ENCODE measurements at regions of chr7 and their contacts with region 1.

Region 1: GRCh38 chr7:128343554-128344430 is at the start of gene RBM28:
- DNase-seq: peak; percentile 88
- H3K4me3 Mint-ChIP-seq: peak within 1 kb of the TSS; percentile 98
- H3K27ac Mint-ChIP-seq: peak within 1 kb of the TSS; percentile 89
- H3K4me1 Mint-ChIP-seq: peaks cover 24% of the 10 kb centered on the region
- H3K27me3 Mint-ChIP-seq: no peaks in the 10 kb centered on the region
- total RNA-seq, gene RBM28: 51.9 to 53.2 TPM

Region 2: GRCh38 chr7:127392566-127393367 is 951.0 kb before region 1 on chr7 and contains the start of gene ZNF800:
- CTCF ChIA-PET with region 1: no interaction called
- intact Hi-C with region 1: loop called (anchors 1 kb)
- DNase-seq: peak; percentile 89
- H3K4me3 Mint-ChIP-seq: peak within 1 kb of the TSS; percentile 95
- H3K27ac Mint-ChIP-seq: peak within 1 kb of the TSS; percentile 93
- H3K4me1 Mint-ChIP-seq: peaks cover 61% of the 10 kb centered on the region
- H3K27me3 Mint-ChIP-seq: no peaks in the 10 kb centered on the region
- total RNA-seq, gene ZNF800: 18.2 to 19.5 TPM

Region 3: DNA sequence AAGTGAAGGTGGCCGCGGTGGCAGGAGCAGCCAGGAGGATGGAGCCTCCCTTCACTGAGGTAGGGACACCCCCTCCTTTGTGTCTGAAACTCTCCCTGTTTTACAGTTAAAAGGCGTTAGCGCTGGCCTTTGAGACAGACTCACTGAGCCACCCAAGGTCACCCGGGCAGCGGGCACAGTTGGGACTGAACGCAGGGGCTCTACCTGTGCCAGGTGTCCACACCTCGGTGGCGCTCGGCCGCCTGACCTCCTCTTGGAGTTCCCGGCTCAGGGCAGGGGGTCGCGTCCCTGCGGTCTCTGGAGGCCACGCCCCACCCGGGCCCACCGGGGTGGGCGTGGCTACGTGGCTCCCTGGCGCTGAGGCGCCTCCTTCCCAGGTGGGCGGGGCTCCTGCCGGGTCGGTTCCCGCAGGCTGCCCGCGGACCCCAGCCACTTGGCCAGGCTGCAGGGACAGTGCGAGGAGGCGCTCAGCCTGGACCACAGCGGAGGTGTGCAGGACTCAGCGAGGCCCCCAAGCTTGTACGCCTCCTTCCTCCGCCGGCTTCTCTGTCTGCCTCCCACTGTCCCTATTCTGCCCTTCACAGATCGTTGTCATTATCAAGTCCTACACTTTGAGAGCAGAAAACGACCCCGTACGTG is 142.6 kb before region 1 on chr7:
- CTCF ChIA-PET with region 1: no interaction called
- intact Hi-C with region 1: no loop called
- DNase-seq: no peak
- H3K4me3 Mint-ChIP-seq: peak overlapping the region; percentile 39
- H3K27ac Mint-ChIP-seq: no peak overlapping the region
- H3K4me1 Mint-ChIP-seq: peaks cover 10% of the 10 kb centered on the region
- H3K27me3 Mint-ChIP-seq: peaks cover 36% of the 10 kb centered on the region

Region 4: GRCh38 chr7:128266883-128267607 is 76.7 kb before region 1 on chr7:
- CTCF ChIA-PET with region 1: no interaction called
- intact Hi-C with region 1: no loop called
- DNase-seq: no peak
- H3K4me3 Mint-ChIP-seq: no peak overlapping the region
- H3K27ac Mint-ChIP-seq: no peak overlapping the region
- H3K4me1 Mint-ChIP-seq: peaks cover 2% of the 10 kb centered on the region
- H3K27me3 Mint-ChIP-seq: peaks cover 27% of the 10 kb centered on the region

Region 5: GRCh38 chr7:128322040-128322643 is 21.6 kb before region 1 on chr7:
- CTCF ChIA-PET with region 1: interaction called, 14 read pairs
- intact Hi-C with region 1: no loop called
- DNase-seq: peak; percentile 26
- H3K4me3 Mint-ChIP-seq: no peak overlapping the region
- H3K27ac Mint-ChIP-seq: no peak overlapping the region
- H3K4me1 Mint-ChIP-seq: peaks cover 11% of the 10 kb centered on the region
- H3K27me3 Mint-ChIP-seq: no peaks in the 10 kb centered on the region

Region 6: GRCh38 chr7:128387216-128388144 is 43.7 kb after region 1 on chr7:
- CTCF ChIA-PET with region 1: interaction called, 297 read pairs
- intact Hi-C with region 1: loop called (anchors 1 kb)
- DNase-seq: peak; percentile 80
- H3K4me3 Mint-ChIP-seq: no peak overlapping the region
- H3K27ac Mint-ChIP-seq: no peak overlapping the region
- H3K4me1 Mint-ChIP-seq: no peaks in the 10 kb centered on the region
- H3K27me3 Mint-ChIP-seq: no peaks in the 10 kb centered on the region

Region 7: DNA sequence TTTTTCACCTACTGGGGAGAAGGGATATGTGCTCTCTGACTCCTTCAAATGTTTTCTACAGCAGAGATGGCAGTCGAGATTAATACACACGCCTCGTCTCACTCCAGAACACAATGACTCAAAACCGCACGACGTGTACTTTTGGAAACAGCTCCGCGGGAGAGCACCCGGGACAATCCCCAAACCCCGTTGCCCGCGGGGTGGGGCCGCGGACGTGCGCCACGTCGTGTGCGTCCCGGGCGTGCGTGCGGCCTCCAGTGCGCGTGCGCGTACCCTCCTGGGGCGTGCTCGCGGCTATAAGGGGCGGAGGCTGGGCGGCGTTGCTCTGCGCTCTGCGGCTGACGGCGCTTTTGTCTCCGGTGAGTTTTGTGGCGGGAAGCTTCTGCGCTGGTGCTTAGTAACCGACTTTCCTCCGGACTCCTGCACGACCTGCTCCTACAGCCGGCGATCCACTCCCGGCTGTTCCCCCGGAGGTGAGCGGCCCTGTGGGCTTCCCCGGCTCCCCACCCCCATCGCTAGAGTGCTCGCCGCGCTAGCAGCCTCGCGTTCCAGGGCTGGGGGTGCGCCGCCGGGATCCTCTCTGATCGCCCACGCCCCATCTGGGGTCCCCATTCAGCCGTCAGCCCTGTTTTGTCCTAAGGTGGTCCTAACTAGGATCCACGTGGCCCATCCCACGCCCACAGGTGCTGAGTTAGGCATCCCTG is 111.9 kb after region 1 on chr7 and contains the start of gene HILPDA:
- CTCF ChIA-PET with region 1: interaction called, 4 read pairs
- intact Hi-C with region 1: loop called (anchors 1 kb)
- DNase-seq: peak; percentile 96
- H3K4me3 Mint-ChIP-seq: peak within 1 kb of the TSS; percentile 96
- H3K27ac Mint-ChIP-seq: peak within 1 kb of the TSS; percentile 96
- H3K4me1 Mint-ChIP-seq: peaks cover 55% of the 10 kb centered on the region
- H3K27me3 Mint-ChIP-seq: peaks cover 8% of the 10 kb centered on the region
- total RNA-seq, gene HILPDA: 12.4 to 13.6 TPM

Region 8: DNA sequence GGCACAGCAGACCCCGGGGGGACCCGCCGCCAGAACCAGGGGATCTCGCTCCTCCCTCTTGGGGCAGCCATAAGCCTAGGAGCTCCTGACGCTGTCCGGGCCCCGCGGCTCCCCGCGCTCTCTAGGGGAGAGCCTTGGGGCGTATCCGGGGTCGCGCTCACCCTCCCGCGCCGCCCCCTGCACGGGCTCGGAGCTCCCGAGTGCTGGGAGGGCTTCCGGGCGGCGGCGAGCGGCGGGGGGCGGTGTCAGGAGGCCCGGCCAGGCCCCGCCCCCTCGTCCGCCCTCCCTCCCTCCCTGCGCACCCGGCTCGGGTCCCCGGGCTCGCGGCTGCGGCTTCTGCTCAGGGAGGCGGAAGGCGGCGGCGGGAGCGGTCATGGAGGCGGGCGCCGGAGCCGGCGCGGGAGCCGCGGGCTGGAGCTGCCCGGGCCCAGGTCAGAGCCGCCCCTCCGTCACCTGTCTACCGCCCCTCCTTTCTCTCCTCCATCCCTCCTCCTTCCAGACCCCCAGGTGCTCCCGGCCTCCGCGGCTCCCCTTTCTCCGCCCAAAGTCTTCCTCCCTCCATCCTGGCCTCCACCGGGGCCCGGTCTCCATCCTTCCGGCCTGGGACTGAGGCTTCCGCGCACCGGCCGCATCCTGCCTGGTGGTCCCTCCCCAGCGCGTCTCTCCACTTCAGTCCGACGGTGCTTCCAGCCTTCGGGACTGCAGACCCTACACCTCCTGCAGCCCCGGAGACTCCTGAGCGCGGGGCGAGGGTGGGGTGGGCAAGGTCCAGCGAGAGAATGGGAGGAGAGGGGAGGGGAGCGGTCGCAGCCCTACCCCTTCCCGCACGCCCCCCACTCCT is 447.5 kb after region 1 on chr7:
- CTCF ChIA-PET with region 1: no interaction called
- intact Hi-C with region 1: loop called (anchors 1 kb)
- DNase-seq: peak; percentile 79
- H3K4me3 Mint-ChIP-seq: peak overlapping the region; percentile 82
- H3K27ac Mint-ChIP-seq: no peak overlapping the region
- H3K4me1 Mint-ChIP-seq: peaks cover 3% of the 10 kb centered on the region
- H3K27me3 Mint-ChIP-seq: peaks cover 3% of the 10 kb centered on the region